CD8-positive, alpha-beta T cell (primary cell): ENCODE measurements at regions of chr2 and their contacts with region 1.

Region 1: GRCh38 chr2:168246483-168247340 is 683 bp downstream of the STK39 start:
- DNase-seq: peak; percentile 58 to 93 (median 81)
- ATAC-seq: peak; percentile 68
- H3K4me3 ChIP-seq: peak overlapping the region; percentile 57 to 60
- H3K4me3 Mint-ChIP-seq: peak overlapping the region; percentile 89
- H3K27ac ChIP-seq: peak overlapping the region; percentile 69 to 81
- H3K27ac Mint-ChIP-seq: peak overlapping the region; percentile 96
- H3K4me1 ChIP-seq: peaks cover 40% of the 10 kb centered on the region
- H3K4me1 Mint-ChIP-seq: peaks cover 40% of the 10 kb centered on the region
- H3K27me3 ChIP-seq: no peaks in the 10 kb centered on the region
- H3K27me3 Mint-ChIP-seq: no peaks in the 10 kb centered on the region
- CTCF ChIP-seq: no peak

Region 2: DNA sequence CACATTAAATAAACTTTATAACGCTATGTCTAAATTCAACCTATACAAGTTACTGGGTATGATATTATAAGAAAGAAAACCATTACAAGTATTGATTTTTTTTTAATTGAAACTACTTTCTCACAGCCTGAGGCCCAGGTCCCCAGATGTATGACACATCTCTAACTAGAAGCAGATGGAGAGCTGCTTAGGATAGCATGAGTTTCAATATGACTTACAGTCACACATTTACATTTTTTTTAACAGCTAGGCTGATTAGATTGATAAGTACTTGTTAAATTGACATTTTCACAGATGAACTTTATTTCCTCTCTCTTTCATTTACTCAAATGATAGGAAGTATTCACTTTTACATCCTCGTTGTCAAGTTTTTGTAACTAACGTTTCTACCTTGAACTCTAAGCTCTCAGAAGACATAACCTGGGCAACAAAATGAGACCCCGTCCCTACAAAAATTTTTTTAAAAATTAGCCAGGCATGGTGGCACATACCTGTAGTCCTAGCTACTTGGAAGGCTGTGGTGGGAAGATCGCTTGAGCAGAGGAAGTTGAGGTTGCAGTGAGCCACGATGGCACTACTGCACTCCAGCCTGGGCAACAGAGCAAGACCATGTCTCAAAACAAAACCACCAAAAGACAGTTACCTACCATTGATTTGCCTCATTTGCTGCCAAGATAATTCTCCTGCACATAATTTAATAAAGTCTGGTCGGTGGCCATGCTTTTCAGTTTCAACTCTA is 51.8 kb before region 1 on chr2:
- CTCF ChIA-PET with region 1: no interaction called
- POLR2A ChIA-PET with region 1: no interaction called
- intact Hi-C with region 1: loop called (anchors 2 to 5 kb)
- DNase-seq: peak in 2 of 9 experiments; percentile 52 to 73
- ATAC-seq: peak; percentile 63
- H3K4me3 ChIP-seq: peak overlapping the region in 1 of 2 experiments; percentile 3
- H3K4me3 Mint-ChIP-seq: peak overlapping the region; percentile 61
- H3K27ac ChIP-seq: peak overlapping the region in 1 of 2 experiments; percentile 60
- H3K27ac Mint-ChIP-seq: peak overlapping the region; percentile 87
- H3K4me1 ChIP-seq: peaks cover 40% of the 10 kb centered on the region
- H3K4me1 Mint-ChIP-seq: peaks cover 82% of the 10 kb centered on the region
- H3K27me3 ChIP-seq: no peaks in the 10 kb centered on the region
- H3K27me3 Mint-ChIP-seq: no peaks in the 10 kb centered on the region
- CTCF ChIP-seq: no peak

Region 3: GRCh38 chr2:168336864-168337263 is 90.2 kb after region 1 on chr2:
- CTCF ChIA-PET with region 1: interaction called, 3 read pairs
- POLR2A ChIA-PET with region 1: no interaction called
- intact Hi-C with region 1: loop called in 1 of 2 experiments (anchors 5 kb)
- DNase-seq: peak in 8 of 9 experiments; percentile 28 to 69 (median 60)
- ATAC-seq: peak; percentile 94
- H3K4me3 ChIP-seq: no peak overlapping the region
- H3K4me3 Mint-ChIP-seq: no peak overlapping the region
- H3K27ac ChIP-seq: no peak overlapping the region
- H3K27ac Mint-ChIP-seq: no peak overlapping the region
- H3K4me1 ChIP-seq: no peaks in the 10 kb centered on the region
- H3K4me1 Mint-ChIP-seq: peaks cover 5% of the 10 kb centered on the region
- H3K27me3 ChIP-seq: no peaks in the 10 kb centered on the region
- H3K27me3 Mint-ChIP-seq: no peaks in the 10 kb centered on the region
- CTCF ChIP-seq: peak; percentile 36

Region 4: GRCh38 chr2:168890006-168890782 is 643.5 kb after region 1 on chr2 and contains the start of gene SPC25:
- CTCF ChIA-PET with region 1: no interaction called
- POLR2A ChIA-PET with region 1: no interaction called
- intact Hi-C with region 1: loop called (anchors 1 to 5 kb)
- DNase-seq: peak; percentile 69 to 93 (median 84)
- ATAC-seq: peak; percentile 99
- H3K4me3 ChIP-seq: peak within 1 kb of the TSS; percentile 58 to 68
- H3K4me3 Mint-ChIP-seq: peak within 1 kb of the TSS; percentile 92
- H3K27ac ChIP-seq: no peak within 1 kb of the TSS
- H3K27ac Mint-ChIP-seq: no peak within 1 kb of the TSS
- H3K4me1 ChIP-seq: peaks cover 4% of the 10 kb centered on the region
- H3K4me1 Mint-ChIP-seq: peaks cover 9% of the 10 kb centered on the region
- H3K27me3 ChIP-seq: no peaks in the 10 kb centered on the region
- H3K27me3 Mint-ChIP-seq: peaks cover 9% of the 10 kb centered on the region
- CTCF ChIP-seq: no peak
- total RNA-seq, gene SPC25: 0.22 TPM in 1 of 2 experiments, not detected in the other

Region 5: DNA sequence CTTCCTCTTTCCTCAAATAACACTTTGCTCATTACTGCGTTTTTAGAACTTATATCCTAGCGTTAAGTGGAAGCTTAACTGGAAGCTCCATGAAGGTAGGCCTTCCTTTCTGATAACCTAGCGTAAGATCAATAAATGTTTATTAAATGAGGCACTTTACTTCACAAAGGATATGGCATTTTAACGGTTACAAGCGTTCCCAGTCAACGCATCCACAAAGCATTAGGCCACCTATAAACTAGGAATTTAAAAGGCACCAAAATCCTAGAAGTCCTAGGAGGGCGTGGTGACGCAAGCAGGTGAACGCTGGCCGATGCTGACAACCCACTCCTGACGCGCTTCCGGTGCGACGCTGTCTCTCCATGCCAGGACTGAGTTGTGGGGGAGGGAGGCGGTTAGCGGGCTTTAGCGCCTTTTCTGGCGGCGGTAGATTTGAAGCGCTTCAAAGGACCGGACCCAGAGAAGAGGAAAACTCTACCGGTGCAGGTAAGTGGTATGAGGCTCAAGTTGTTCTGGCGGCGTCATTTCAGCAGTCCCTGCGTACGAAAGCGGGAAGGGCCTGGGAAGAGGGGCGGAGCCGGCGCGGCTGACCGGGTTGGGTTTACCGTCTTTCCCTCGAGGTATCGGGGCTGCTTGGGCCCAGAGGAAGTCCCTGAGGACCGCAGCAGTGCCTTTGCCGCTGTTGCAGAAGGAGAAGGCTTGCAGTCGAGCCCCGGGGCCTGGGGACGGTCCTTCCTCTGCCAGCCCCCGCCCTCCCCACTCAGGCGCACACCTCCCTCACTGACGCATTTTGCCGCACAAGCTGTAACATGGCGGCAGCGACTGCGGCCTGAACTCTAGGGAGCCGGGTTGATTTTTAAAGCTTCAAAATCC is 1337.5 kb after region 1 on chr2 and contains the start of gene PPIG:
- CTCF ChIA-PET with region 1: no interaction called
- POLR2A ChIA-PET with region 1: no interaction called
- intact Hi-C with region 1: loop called (anchors 10 kb)
- DNase-seq: peak; percentile 74 to 97 (median 88)
- ATAC-seq: peak; percentile 91
- H3K4me3 ChIP-seq: peak within 1 kb of the TSS; percentile 85 to 100
- H3K4me3 Mint-ChIP-seq: peak within 1 kb of the TSS; percentile 97
- H3K27ac ChIP-seq: peak within 1 kb of the TSS; percentile 97 to 98
- H3K27ac Mint-ChIP-seq: peak within 1 kb of the TSS; percentile 100
- H3K4me1 ChIP-seq: peaks cover 25% of the 10 kb centered on the region
- H3K4me1 Mint-ChIP-seq: peaks cover 39% of the 10 kb centered on the region
- H3K27me3 ChIP-seq: no peaks in the 10 kb centered on the region
- H3K27me3 Mint-ChIP-seq: no peaks in the 10 kb centered on the region
- CTCF ChIP-seq: no peak
- total RNA-seq, gene PPIG: 89.8 to 104 TPM

Region 6: GRCh38 chr2:169798718-169799592 is 1552.2 kb after region 1 on chr2 and contains the start of gene SSB:
- CTCF ChIA-PET with region 1: no interaction called
- POLR2A ChIA-PET with region 1: no interaction called
- intact Hi-C with region 1: loop called in 1 of 2 experiments (anchors 10 kb)
- DNase-seq: peak; percentile 83 to 97 (median 93)
- ATAC-seq: peak; percentile 92
- H3K4me3 ChIP-seq: peak within 1 kb of the TSS; percentile 55 to 80
- H3K4me3 Mint-ChIP-seq: peak within 1 kb of the TSS; percentile 80
- H3K27ac ChIP-seq: peak within 1 kb of the TSS; percentile 86 to 89
- H3K27ac Mint-ChIP-seq: peak within 1 kb of the TSS; percentile 87
- H3K4me1 ChIP-seq: peaks cover 20% of the 10 kb centered on the region
- H3K4me1 Mint-ChIP-seq: peaks cover 29% of the 10 kb centered on the region
- H3K27me3 ChIP-seq: no peaks in the 10 kb centered on the region
- H3K27me3 Mint-ChIP-seq: no peaks in the 10 kb centered on the region
- CTCF ChIP-seq: no peak
- total RNA-seq, gene SSB: 150 to 170 TPM